ENCODE measurements at regions of chr4 and their contacts with region 1.

Region 1: GRCh38 chr4:6873792-6874461 is 35.7 kb upstream of the TBC1D14 start:
- DNase-seq: peak; percentile 82
- ATAC-seq: peak; percentile 70 to 79
- H3K4me3 ChIP-seq: no peak overlapping the region
- H3K27ac ChIP-seq: no peak overlapping the region
- H3K4me1 ChIP-seq: peaks cover 31% of the 10 kb centered on the region
- H3K27me3 ChIP-seq: no peaks in the 10 kb centered on the region
- CTCF ChIP-seq: peak; percentile 85

Region 2: GRCh38 chr4:6709230-6710114 is 164.5 kb before region 1 on chr4 and contains the start of gene MRFAP1L1:
- intact Hi-C with region 1: loop called (anchors 10 kb)
- DNase-seq: peak; percentile 98
- ATAC-seq: peak; percentile 96 to 99
- H3K4me3 ChIP-seq: peak within 1 kb of the TSS; percentile 89
- H3K27ac ChIP-seq: peak within 1 kb of the TSS; percentile 82
- H3K4me1 ChIP-seq: peaks cover 37% of the 10 kb centered on the region
- H3K27me3 ChIP-seq: no peaks in the 10 kb centered on the region
- CTCF ChIP-seq: no peak
- total RNA-seq, gene MRFAP1L1: 48.8 TPM

Region 3: DNA sequence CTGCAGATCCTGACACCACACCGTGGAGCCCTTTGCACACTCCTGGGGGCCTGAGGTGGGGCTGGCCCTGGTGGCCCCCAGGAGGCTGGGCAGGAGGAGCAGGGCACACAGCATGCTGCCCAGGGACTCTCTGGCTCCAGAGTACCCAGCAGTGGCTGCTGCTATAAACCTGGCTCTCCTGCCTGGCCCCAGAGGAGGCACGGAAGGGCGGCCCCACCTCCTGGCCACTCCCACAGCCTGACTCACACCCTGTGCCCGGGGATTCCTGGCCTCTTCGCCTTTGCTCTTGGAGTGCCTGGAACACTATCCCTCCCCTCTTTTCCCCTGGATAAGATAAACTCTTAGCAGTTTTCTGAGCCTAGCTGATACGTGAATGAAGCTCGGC is 560.8 kb after region 1 on chr4 and contains the start of gene PSAPL1:
- intact Hi-C with region 1: no loop called
- DNase-seq: peak; percentile 77
- ATAC-seq: peak; percentile 85 to 94
- H3K4me3 ChIP-seq: no peak within 1 kb of the TSS
- H3K27ac ChIP-seq: no peak within 1 kb of the TSS
- H3K4me1 ChIP-seq: peaks cover 15% of the 10 kb centered on the region
- H3K27me3 ChIP-seq: peaks cover 3% of the 10 kb centered on the region
- CTCF ChIP-seq: no peak
- total RNA-seq, gene PSAPL1: not detected